OCI-LY7 (cell line): ENCODE measurements at regions of chr1 and their contacts with region 1.

Region 1: GRCh38 chr1:60865166-60865565 is 217.2 kb upstream of the NFIA start:
- DNase-seq: no peak
- H3K4me3 ChIP-seq: no peak overlapping the region
- H3K27ac ChIP-seq: no peak overlapping the region
- H3K4me1 ChIP-seq: no peaks in the 10 kb centered on the region
- CTCF ChIP-seq: no peak

Region 2: DNA sequence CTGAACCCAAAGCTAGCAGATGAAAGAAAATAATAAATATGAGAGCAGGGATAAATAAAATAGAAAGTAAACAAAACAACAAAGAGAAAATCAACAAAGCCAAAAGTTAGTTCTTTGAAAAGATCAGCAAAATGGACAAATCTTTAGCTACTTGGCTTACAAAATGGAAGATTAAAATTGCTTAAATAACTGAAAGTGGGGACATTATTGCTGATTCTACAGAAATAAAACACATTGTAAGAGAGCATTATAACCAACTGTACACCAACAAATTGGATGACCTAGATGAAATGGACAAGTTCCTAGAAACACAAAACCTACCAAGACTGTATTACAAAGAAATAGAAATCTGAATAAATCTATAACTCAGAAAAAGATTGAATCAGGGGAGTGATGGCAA is 553.3 kb before region 1 on chr1:
- CTCF ChIA-PET with region 1: no interaction called
- POLR2A ChIA-PET with region 1: interaction called, 10 read pairs
- intact Hi-C with region 1: no loop called
- DNase-seq: no peak
- H3K4me3 ChIP-seq: no peak overlapping the region
- H3K27ac ChIP-seq: no peak overlapping the region
- H3K4me1 ChIP-seq: no peaks in the 10 kb centered on the region
- CTCF ChIP-seq: no peak

Region 3: GRCh38 chr1:61076728-61077675 is 211.8 kb after region 1 on chr1:
- CTCF ChIA-PET with region 1: no interaction called
- POLR2A ChIA-PET with region 1: no interaction called
- intact Hi-C with region 1: no loop called
- DNase-seq: peak; percentile 96
- H3K4me3 ChIP-seq: peak overlapping the region; percentile 74
- H3K27ac ChIP-seq: peak overlapping the region; percentile 91
- H3K4me1 ChIP-seq: peaks cover 45% of the 10 kb centered on the region
- CTCF ChIP-seq: no peak